ENCODE measurements at regions of chr6 and their contacts with region 1.

Region 1: DNA sequence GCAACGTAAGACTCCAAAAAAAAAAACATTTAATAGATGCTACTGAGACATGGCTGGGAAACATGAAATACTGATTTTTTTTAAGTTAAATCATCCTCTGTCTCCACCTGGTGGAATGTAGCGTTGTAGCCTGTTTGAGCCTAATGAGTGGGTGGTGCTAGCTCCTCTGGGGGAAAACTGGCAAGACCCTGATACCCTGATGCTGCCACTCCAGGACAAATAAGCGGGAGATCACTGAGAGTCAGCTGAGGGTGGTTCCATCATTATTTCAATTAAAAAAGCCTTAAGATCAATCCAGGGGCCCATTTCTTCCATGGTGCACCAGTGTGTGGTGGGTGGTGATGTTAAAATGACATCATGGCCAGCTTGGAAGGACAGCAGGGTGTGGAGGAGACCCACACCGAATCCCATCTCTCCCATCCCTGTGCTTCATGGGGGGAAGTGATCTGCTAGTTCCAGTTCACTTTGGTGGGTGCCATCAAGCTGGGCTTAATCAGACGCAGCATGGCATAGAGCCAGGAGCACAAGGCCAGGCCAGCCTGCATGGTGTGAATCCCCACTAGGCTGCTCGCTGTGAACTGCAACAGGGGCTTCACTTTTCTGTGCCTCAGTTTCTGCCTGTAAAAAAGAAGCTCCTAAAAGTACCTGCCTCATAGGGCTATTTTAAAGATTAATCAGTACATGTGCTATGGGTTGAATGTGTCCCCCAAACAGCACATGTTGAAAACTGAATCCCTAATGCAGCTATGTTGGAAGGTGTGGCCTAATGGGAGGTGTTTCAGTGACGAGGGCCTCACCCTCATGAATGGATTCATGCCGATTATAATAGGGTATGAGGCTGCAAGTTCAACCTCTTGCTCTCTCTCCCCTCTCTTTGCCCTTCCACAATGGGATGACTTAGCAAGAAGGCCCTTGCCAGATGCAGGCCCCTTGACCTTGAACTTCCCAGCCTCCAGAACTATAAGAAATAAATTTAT is 13.0 kb upstream of the MRPS10 start:
- DNase-seq: peak; percentile 66
- ATAC-seq: no peak
- H3K4me3 ChIP-seq: no peak overlapping the region
- H3K27ac ChIP-seq: peak overlapping the region; percentile 98
- H3K4me1 ChIP-seq: peaks cover 47% of the 10 kb centered on the region
- H3K27me3 ChIP-seq: no peaks in the 10 kb centered on the region
- CTCF ChIP-seq: peak; percentile 88

Region 2: GRCh38 chr6:42075159-42075838 is 155.3 kb before region 1 on chr6:
- CTCF ChIA-PET with region 1: no interaction called
- POLR2A ChIA-PET with region 1: no interaction called
- intact Hi-C with region 1: loop called (anchors 2 kb)
- DNase-seq: peak; percentile 93
- ATAC-seq: peak; percentile 88
- H3K4me3 ChIP-seq: no peak overlapping the region
- H3K27ac ChIP-seq: no peak overlapping the region
- H3K4me1 ChIP-seq: peaks cover 4% of the 10 kb centered on the region; the same call in 1 of the 2 replicates
- H3K27me3 ChIP-seq: no peaks in the 10 kb centered on the region
- CTCF ChIP-seq: peak; percentile 95

Measured in PC-3 (cell line).